ENCODE measurements at regions of chr6 and their contacts with region 1.

Region 1: DNA sequence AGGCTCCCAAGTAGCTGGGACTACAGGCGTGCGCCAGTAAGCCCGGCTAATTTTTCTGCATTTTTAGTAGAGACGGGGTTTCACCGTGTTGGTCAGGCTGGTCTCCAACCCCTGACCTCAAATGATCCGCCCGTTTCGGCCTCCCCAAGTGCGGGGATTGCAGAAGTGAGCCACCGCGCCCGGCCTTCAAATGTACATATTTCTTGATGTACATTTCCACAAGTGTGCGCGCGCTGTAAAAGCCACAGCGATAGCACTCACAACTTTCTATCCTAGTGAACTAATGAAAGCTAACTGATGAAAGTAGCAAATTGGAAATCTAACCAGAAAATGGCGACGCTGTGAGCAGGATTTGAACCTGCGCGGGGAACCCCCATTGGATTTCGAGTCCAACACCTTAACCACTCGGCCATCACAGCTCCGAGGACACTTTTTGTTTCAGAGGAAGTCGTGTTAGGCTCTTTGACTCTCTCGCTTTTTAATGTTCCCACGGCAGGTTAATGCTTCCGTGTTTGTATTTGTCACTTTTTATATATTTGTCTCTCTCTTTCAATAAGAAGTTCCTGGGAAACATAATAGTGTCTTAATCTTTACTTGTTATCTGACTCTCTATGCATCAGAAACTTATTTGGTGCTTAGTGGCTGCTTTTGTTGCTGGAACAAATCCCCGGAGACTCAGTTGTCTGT is 199.4 kb upstream of the ZNF184 start:
- DNase-seq: no peak
- ATAC-seq: no peak
- H3K4me3 ChIP-seq: peak overlapping the region in 1 of 10 donors; percentile 4
- H3K27ac ChIP-seq: no peak overlapping the region
- H3K4me1 ChIP-seq: peaks cover 0 to 41% (median 0%) of the 10 kb centered on the region in 9 donors
- H3K27me3 ChIP-seq: peaks cover 12 to 100% (median 99%) of the 10 kb centered on the region in 7 donors
- CTCF ChIP-seq: no peak

Region 2: DNA sequence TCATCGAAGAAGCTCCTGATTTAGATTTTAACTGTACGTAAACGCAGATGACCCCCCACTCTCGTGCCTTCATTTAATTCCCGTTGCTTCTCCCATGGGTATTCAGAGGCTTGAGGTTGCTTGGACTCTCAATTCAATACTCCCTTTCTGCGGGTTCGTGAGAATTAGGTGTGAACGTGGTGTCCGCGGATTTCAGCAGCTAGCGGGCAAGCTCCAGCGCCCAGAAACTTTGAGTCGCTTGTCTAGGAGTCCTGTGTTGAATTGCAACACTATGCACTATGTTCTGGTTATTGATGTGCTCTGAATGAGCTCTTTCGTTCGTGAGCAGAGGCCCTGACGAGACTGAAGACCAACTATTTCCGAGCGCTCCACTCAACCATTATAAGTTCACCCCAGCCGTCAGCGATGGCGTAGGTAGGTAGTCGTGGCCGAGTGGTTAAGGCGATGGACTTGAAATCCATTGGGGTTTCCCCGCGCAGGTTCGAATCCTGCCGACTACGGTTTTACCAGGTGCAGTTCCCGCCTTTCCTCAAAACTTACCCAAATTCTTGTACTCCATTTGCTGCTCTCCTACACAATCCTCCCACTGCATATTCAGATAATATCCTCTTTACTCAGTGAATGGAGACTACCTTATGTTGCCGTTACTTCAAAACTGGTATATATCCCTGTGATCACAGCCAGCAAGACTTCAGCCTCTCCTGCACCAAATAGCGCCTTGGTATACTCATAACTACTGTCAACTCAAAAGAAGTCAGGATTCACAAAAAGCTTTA is 126.8 kb before region 1 on chr6:
- intact Hi-C with region 1: no loop called
- DNase-seq: no peak
- ATAC-seq: no peak
- H3K4me3 ChIP-seq: peak overlapping the region in 2 of 10 donors; percentile 18 to 24
- H3K27ac ChIP-seq: no peak overlapping the region
- H3K4me1 ChIP-seq: peaks cover 0 to 9% (median 5%) of the 10 kb centered on the region in 9 donors
- H3K27me3 ChIP-seq: peaks cover 22 to 100% (median 95%) of the 10 kb centered on the region in 7 donors
- CTCF ChIP-seq: no peak

Region 3: DNA sequence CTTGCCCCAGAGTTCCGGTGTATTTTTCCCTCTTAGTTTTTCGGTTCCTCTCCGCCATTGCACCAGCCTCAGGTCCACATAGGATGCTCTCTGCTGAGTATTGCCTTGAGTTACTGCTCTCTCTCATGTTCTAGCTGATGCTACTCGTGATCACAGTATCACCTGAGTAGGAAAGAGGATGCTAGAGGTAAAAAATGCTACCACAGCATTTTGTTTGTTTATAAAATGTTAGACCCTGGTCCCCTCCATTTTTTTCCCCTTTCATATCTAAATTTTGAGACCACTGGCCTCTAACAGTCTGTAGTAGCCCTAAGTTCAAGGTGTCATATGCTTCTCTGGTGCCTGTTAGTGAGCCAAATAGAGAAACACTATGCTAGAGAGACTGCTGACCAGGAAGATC is 64.4 kb after region 1 on chr6:
- intact Hi-C with region 1: loop called in 1 of 10 experiments (anchors 10 kb)
- DNase-seq: no peak
- ATAC-seq: no peak
- H3K4me3 ChIP-seq: no peak overlapping the region
- H3K27ac ChIP-seq: no peak overlapping the region
- H3K4me1 ChIP-seq: no peaks in the 10 kb centered on the region
- H3K27me3 ChIP-seq: peaks cover 0 to 87% (median 48%) of the 10 kb centered on the region in 7 donors
- CTCF ChIP-seq: no peak

Measured in heart right ventricle (tissue), 16 donors.